Mammary epithelial cell (primary cell): ENCODE measurements at regions of chr10 and their contacts with region 1.

Region 1: DNA sequence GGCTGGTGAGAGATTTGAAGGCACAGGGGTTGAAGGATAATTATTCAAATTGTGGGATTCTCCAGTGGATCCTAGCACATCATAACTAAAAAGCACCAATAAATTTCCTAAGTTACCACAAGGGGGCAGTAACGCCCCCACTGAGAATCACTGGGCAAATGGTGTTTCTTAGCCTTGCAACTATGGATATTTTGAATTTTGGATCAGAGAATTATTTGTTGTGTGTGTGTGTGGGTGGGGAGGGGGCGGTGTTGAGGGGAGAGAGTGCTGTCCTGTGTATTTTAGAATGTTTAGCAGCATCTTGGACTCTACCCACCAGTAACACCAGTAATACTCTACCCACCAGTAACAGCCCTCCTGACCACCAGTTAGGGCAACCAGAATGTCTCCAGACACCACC is 63.3 kb upstream of the PRKG1 start:
- DNase-seq: no peak
- H3K4me3 ChIP-seq: no peak overlapping the region
- H3K27ac ChIP-seq: no peak overlapping the region
- H3K4me1 ChIP-seq: peaks cover 10% of the 10 kb centered on the region
- H3K27me3 ChIP-seq: no peaks in the 10 kb centered on the region
- CTCF ChIP-seq: peak; percentile 66 to 77

Region 2: GRCh38 chr10:51047857-51048256 is 36.9 kb after region 1 on chr10:
- CTCF ChIA-PET with region 1: no interaction called
- dilution Hi-C with region 1: no loop called
- in situ Hi-C with region 1: no loop called
- intact Hi-C with region 1: loop called (anchors 2 kb)
- DNase-seq: no peak
- H3K4me3 ChIP-seq: no peak overlapping the region
- H3K27ac ChIP-seq: no peak overlapping the region
- H3K4me1 ChIP-seq: no peaks in the 10 kb centered on the region
- H3K27me3 ChIP-seq: no peaks in the 10 kb centered on the region
- CTCF ChIP-seq: peak in 1 of 2 donors; percentile 28

Region 3: GRCh38 chr10:52215745-52216361 is 1204.9 kb after region 1 on chr10:
- CTCF ChIA-PET with region 1: no interaction called
- dilution Hi-C with region 1: no loop called
- in situ Hi-C with region 1: loop called in 1 of 2 experiments (anchors 25 kb)
- intact Hi-C with region 1: loop called (anchors 5 kb)
- DNase-seq: peak; percentile 57
- H3K4me3 ChIP-seq: no peak overlapping the region
- H3K27ac ChIP-seq: no peak overlapping the region
- H3K4me1 ChIP-seq: no peaks in the 10 kb centered on the region
- H3K27me3 ChIP-seq: no peaks in the 10 kb centered on the region
- CTCF ChIP-seq: peak; percentile 66 to 68